Endothelial cell of umbilical vein (primary cell): ENCODE measurements at regions of chr6 and their contacts with region 1.

Region 1: GRCh38 chr6:145704143-145704781 is 31.1 kb downstream of the EPM2A start:
- DNase-seq: peak; percentile 54
- H3K4me3 ChIP-seq: no peak overlapping the region
- H3K27ac ChIP-seq: no peak overlapping the region
- H3K4me1 ChIP-seq: peaks cover 30% of the 10 kb centered on the region
- H3K27me3 ChIP-seq: no peaks in the 10 kb centered on the region
- CTCF ChIP-seq: peak; percentile 13 to 20
- POLR2A ChIP-seq: no peak

Region 2: GRCh38 chr6:144582939-144583613 is 1121.2 kb before region 1 on chr6:
- CTCF ChIA-PET with region 1: interaction called, 3 read pairs
- POLR2A ChIA-PET with region 1: no interaction called
- dilution Hi-C with region 1: no loop called
- intact Hi-C with region 1: loop called (anchors 5 kb)
- DNase-seq: no peak
- H3K4me3 ChIP-seq: no peak overlapping the region
- H3K27ac ChIP-seq: no peak overlapping the region
- H3K4me1 ChIP-seq: peaks cover 7% of the 10 kb centered on the region
- H3K27me3 ChIP-seq: no peaks in the 10 kb centered on the region
- CTCF ChIP-seq: no peak
- POLR2A ChIP-seq: no peak

Region 3: GRCh38 chr6:145214570-145214969 is 489.7 kb before region 1 on chr6:
- CTCF ChIA-PET with region 1: interaction called, 7 read pairs
- POLR2A ChIA-PET with region 1: no interaction called
- dilution Hi-C with region 1: no loop called
- intact Hi-C with region 1: loop called (anchors 2 kb)
- DNase-seq: peak; percentile 45
- H3K4me3 ChIP-seq: no peak overlapping the region
- H3K27ac ChIP-seq: no peak overlapping the region
- H3K4me1 ChIP-seq: no peaks in the 10 kb centered on the region
- H3K27me3 ChIP-seq: no peaks in the 10 kb centered on the region
- CTCF ChIP-seq: peak; percentile 18 to 27
- POLR2A ChIP-seq: no peak

Region 4: GRCh38 chr6:145656128-145656527 is 48.1 kb before region 1 on chr6:
- CTCF ChIA-PET with region 1: interaction called, 17 read pairs
- POLR2A ChIA-PET with region 1: no interaction called
- dilution Hi-C with region 1: no loop called
- intact Hi-C with region 1: no loop called
- DNase-seq: peak; percentile 8
- H3K4me3 ChIP-seq: no peak overlapping the region
- H3K27ac ChIP-seq: peak overlapping the region; percentile 18
- H3K4me1 ChIP-seq: peaks cover 7% of the 10 kb centered on the region
- H3K27me3 ChIP-seq: no peaks in the 10 kb centered on the region
- CTCF ChIP-seq: no peak
- POLR2A ChIP-seq: no peak

Region 5: DNA sequence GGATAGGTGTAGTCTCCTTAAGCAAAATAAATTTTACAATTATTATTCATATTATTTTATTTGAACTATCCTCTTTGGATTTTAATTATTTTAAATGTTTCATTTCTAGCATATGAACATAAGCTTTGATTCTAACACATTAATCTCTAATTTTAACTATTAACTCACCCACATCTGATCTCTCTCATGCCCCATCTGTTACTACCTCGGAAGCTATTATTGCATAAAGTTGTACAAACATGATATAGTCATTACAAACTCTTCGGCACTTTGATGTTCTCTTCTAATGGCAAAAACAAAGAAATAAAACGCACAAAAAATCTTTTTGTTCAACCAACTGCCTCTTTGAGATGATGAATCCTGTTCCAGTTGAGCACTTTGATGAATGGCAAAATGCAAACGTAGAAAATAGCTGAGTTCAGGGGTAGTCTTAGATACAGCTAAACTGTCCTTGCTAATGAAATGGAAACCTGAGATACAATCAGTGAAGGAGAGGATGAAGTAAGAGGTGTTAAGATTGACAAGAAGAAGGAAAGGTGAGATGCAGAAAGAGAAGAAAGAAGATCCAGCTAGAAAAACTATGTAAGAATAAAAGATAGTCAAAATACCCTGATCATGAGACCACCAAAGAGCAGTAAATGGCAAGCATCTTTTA is 10.1 kb before region 1 on chr6:
- CTCF ChIA-PET with region 1: interaction called, 10 read pairs
- POLR2A ChIA-PET with region 1: no interaction called
- dilution Hi-C with region 1: no loop called
- intact Hi-C with region 1: no loop called
- DNase-seq: no peak
- H3K4me3 ChIP-seq: no peak overlapping the region
- H3K27ac ChIP-seq: no peak overlapping the region
- H3K4me1 ChIP-seq: peaks cover 13% of the 10 kb centered on the region
- H3K27me3 ChIP-seq: no peaks in the 10 kb centered on the region
- CTCF ChIP-seq: no peak
- POLR2A ChIP-seq: no peak

Region 6: GRCh38 chr6:145734486-145735355 is 30.5 kb after region 1 on chr6:
- CTCF ChIA-PET with region 1: interaction called, 8 read pairs
- POLR2A ChIA-PET with region 1: no interaction called
- dilution Hi-C with region 1: no loop called
- intact Hi-C with region 1: loop called (anchors 1 kb)
- DNase-seq: peak; percentile 89
- H3K4me3 ChIP-seq: peak overlapping the region; percentile 51 to 60 (median 56)
- H3K27ac ChIP-seq: peak overlapping the region; percentile 87
- H3K4me1 ChIP-seq: peaks cover 18% of the 10 kb centered on the region
- H3K27me3 ChIP-seq: no peaks in the 10 kb centered on the region
- CTCF ChIP-seq: no peak
- POLR2A ChIP-seq: peak; percentile 91

Region 7: DNA sequence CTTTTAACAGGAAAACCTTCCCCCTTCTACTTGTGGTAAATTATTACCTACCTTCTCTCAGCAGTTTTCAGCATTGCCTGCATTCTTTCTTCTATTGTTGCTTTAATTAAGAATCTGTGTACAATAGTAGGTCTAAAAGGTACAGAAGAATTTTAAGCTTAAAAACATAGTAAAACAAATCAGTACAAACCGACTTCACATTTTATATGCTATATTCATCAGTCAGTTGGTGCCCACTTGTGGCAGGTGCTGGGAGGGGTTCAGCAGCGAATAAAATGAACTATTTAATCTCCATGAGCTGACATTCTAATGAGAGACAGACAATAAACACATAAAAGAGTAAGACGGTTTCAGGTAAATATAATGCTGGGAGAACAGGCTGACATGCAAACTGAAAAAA is 183.7 kb after region 1 on chr6:
- CTCF ChIA-PET with region 1: interaction called, 11 read pairs
- POLR2A ChIA-PET with region 1: no interaction called
- dilution Hi-C with region 1: no loop called
- intact Hi-C with region 1: no loop called
- DNase-seq: peak; percentile 70
- H3K4me3 ChIP-seq: no peak overlapping the region
- H3K27ac ChIP-seq: no peak overlapping the region
- H3K4me1 ChIP-seq: peaks cover 9% of the 10 kb centered on the region
- H3K27me3 ChIP-seq: no peaks in the 10 kb centered on the region
- CTCF ChIP-seq: peak; percentile 22 to 46
- POLR2A ChIP-seq: no peak